Heart right ventricle (tissue), 16 donors: ENCODE measurements at regions of chr1 and their contacts with region 1.

Region 1: DNA sequence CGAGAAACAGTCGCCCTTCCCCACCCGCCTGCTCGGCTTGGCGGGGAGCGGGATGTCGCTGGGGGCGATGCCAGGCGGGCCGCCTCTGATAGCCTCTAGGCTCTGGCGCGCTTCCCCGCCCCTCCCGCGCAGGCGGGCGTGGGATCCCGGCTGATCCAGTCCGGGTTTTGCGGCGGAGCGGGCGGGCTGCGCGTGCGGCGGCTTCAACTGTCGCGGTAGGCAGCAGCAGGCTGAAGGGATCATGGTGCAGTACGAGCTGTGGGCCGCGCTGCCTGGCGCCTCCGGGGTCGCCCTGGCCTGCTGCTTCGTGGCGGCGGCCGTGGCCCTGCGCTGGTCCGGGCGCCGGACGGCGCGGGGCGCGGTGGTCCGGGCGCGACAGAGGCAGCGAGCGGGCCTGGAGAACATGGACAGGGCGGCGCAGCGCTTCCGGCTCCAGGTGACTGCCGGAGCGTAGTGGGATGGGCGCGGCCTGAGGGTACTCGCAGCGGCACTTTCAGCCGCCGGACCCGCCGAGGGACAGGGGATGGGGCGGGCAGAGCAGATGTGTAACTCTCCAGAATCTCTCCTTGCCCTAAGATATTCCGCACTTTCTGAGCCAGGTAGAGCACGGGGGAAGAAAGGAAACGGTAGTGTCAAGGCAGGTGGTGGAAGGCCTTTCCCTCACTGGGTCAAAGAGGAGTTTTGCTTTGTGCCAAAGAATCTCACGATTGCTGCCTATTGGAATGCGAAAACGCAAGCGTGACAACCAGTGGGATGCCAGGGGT is at the start of gene FAAH:
- DNase-seq: peak; percentile 45 to 70
- ATAC-seq: peak; percentile 57 to 86 (median 72)
- H3K4me3 ChIP-seq: peak within 1 kb of the TSS; percentile 32 to 57 (median 49)
- H3K27ac ChIP-seq: peak within 1 kb of the TSS in 1 of 10 donors; percentile 8
- H3K4me1 ChIP-seq: peaks cover 0 to 23% (median 15%) of the 10 kb centered on the region in 9 donors
- H3K27me3 ChIP-seq: peaks cover 0 to 18% (median 5%) of the 10 kb centered on the region in 7 donors
- CTCF ChIP-seq: no peak
- total RNA-seq, gene FAAH: 1.8 to 9.8 (median 3.1) TPM

Region 2: GRCh38 chr1:47507881-47508701 is 1113.8 kb after region 1 on chr1:
- intact Hi-C with region 1: loop called in 1 of 10 experiments (anchors 5 kb)
- DNase-seq: peak; percentile 25 to 37
- ATAC-seq: peak; percentile 41 to 81 (median 66)
- H3K4me3 ChIP-seq: peak overlapping the region; percentile 38 to 61 (median 49)
- H3K27ac ChIP-seq: peak overlapping the region in 1 of 10 donors; percentile 22
- H3K4me1 ChIP-seq: peaks cover 0 to 14% (median 12%) of the 10 kb centered on the region in 9 donors
- H3K27me3 ChIP-seq: peaks cover 5 to 89% (median 76%) of the 10 kb centered on the region in 7 donors
- CTCF ChIP-seq: no peak